Transverse colon (tissue), 4 donors: ENCODE measurements at regions of chr17 and their contacts with region 1.

Region 1: DNA sequence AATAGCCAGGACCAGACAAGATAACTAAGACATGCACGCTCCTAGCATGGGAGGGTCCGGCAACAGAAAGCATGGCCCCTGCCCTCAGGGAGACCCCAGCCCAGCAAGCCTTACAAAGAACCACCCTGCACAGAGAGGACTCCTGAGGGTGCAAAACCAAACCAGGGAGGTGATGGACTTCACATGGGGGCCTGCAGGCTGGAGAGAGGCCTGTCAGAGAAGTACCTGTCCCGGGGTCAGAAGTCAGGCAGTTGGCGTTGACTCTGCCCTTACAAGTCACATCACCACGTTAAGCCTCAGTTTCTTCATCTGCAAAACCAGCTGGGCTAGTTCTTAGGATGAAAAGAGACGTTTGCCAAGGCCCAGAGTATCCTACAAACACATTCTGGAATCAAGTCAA is 4.7 kb downstream of the OTOP2 start:
- DNase-seq: no peak
- H3K4me3 ChIP-seq: no peak overlapping the region
- H3K27ac ChIP-seq: no peak overlapping the region
- H3K4me1 ChIP-seq: peaks cover 1 to 12% (median 6%) of the 10 kb centered on the region in 4 donors
- H3K27me3 ChIP-seq: peaks cover 82% of the 10 kb centered on the region
- CTCF ChIP-seq: no peak
- EP300 ChIP-seq: no peak
- POLR2A ChIP-seq: no peak

Region 2: DNA sequence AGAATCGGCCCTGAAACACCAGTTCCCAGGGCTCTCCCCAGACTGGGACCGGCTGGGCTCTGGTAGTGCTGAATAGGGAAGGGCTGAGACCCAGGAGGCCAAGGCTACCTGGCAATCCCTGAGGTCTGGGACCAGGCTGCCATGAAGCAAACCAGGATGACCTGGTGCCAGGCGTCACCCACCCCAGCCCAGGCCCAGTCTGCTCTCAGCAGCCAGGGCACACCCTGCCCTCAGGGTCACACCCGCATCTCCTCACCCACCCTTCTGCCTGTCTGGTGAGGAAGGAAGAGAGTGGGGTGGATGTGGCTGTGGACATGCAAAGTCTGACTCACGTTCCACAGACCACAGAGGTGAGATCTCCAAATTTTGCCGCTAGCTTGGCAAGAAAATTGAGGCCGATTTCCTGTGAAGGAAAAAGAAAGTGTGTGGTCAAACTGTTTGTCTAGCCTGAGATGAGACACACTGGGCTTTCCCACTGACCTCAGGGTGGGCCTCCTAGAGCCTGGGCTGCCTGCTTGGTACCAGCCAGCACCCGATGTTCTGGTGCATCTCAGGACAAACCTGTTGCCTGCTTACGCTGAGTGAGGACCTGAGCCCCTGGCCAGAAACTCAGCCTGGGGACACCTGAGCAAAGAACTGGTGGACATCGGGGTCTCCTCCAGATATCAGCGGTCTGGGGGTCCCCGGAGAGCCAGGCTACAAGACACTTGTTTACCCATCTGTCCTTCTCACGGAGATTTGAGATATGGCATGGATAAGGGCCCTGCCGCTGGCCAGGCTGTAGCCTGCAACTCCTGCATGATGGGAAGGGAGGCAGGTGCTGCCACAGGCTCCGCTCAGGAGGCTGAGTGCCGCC is 198.1 kb before region 1 on chr17:
- in situ Hi-C with region 1: no loop called
- intact Hi-C with region 1: no loop called
- DNase-seq: peak; percentile 25
- H3K4me3 ChIP-seq: no peak overlapping the region
- H3K27ac ChIP-seq: no peak overlapping the region
- H3K4me1 ChIP-seq: no peaks in the 10 kb centered on the region
- H3K27me3 ChIP-seq: peaks cover 1% of the 10 kb centered on the region
- CTCF ChIP-seq: no peak
- EP300 ChIP-seq: no peak
- POLR2A ChIP-seq: no peak

Region 3: DNA sequence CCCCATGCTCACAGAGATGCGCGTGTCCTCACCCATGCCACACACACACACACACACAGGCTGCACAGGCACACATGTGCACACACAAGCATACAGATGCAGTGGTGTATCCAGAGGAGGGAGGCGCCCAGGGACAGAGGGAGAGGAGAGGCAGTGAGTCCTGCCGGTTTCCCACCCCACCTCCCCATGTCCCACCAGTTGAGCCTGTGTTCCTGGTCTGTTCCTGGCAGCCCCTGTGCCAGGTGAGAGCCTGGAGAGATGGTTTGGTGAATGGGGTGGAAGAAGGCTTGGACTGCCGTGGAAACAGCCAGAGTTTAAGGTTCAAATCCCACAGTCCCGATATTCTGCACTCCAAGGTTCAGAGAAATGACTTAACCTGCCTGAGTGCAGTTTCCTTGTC is 25.1 kb before region 1 on chr17:
- in situ Hi-C with region 1: no loop called
- intact Hi-C with region 1: loop called (anchors 1 kb)
- DNase-seq: no peak
- H3K4me3 ChIP-seq: no peak overlapping the region
- H3K27ac ChIP-seq: no peak overlapping the region
- H3K4me1 ChIP-seq: no peaks in the 10 kb centered on the region
- H3K27me3 ChIP-seq: peaks cover 17% of the 10 kb centered on the region
- CTCF ChIP-seq: no peak
- EP300 ChIP-seq: no peak
- POLR2A ChIP-seq: no peak

Region 4: GRCh38 chr17:74972107-74972972 is 43.6 kb after region 1 on chr17 and contains the start of gene HID1:
- in situ Hi-C with region 1: no loop called
- intact Hi-C with region 1: no loop called
- DNase-seq: peak; percentile 84
- H3K4me3 ChIP-seq: peak within 1 kb of the TSS; percentile 37 to 76 (median 60)
- H3K27ac ChIP-seq: peak within 1 kb of the TSS; percentile 60 to 77 (median 74)
- H3K4me1 ChIP-seq: peaks cover 0 to 26% (median 20%) of the 10 kb centered on the region in 4 donors
- H3K27me3 ChIP-seq: peaks cover 36% of the 10 kb centered on the region
- CTCF ChIP-seq: no peak
- EP300 ChIP-seq: no peak
- POLR2A ChIP-seq: peak; percentile 59
- total RNA-seq, gene HID1: 30.2 to 221 (median 50.7) TPM